Sigmoid colon (tissue), 7 donors: ENCODE measurements at regions of chr15 and their contacts with region 1.

Region 1: DNA sequence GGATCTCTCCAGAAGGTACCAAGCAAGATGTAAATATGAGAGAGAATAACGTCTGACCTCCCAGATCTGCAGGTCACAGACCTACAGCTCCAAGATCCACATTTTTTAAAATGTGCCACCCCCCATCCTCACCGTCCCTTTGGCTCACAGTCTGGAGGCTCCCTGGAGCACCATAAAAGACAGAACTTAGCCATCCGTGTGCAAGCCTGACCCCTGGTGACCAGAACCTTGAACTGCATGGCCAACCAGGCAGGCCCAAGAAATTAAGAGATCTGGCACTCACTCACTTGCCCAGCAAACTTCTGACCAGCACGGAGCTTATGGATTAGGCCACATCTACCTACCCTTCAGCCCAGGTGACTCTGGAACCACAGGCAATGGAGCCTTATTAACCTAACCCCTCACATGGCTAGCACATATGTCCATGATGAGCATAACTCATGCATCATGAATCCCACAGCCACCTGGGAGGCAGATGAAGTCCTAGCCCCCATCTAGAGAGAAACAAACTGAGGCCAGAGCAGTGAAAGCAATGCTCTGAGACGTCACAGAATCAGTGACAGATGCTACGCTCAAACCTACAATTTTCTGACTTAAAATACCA is 275.3 kb downstream of the UACA start:
- DNase-seq: peak; percentile 82
- H3K4me3 ChIP-seq: no peak overlapping the region
- H3K27ac ChIP-seq: no peak overlapping the region
- H3K4me1 ChIP-seq: no peaks in the 10 kb centered on the region
- H3K27me3 ChIP-seq: no peaks in the 10 kb centered on the region
- CTCF ChIP-seq: peak; percentile 89 to 97 (median 95)
- EP300 ChIP-seq: no peak
- POLR2A ChIP-seq: no peak

Region 2: DNA sequence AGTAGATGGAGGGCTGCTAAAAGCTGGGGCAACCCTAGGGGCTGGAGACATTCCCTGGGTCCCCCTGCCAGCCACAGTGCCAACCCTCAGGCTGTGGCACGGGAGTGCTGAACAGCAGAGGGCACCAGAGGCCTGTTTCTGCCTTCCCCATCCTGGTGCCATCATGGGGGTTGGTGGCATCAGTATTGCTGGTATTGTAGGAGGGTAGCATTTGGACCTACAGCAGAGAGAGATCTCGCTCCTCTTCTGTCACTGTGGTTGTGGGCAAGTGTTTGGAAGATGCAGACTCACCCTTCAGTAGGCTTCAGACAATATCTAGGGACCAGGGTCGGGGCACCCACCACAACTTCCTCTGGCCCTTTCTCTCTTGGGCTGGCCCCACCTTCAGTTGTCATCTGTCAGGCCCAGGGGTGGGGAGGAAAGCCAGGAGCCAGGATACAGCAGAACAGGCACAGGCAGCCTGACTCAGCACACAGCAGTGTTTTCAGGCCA is 912.0 kb before region 1 on chr15:
- intact Hi-C with region 1: loop called (anchors 2 kb)
- DNase-seq: no peak
- H3K4me3 ChIP-seq: no peak overlapping the region
- H3K27ac ChIP-seq: no peak overlapping the region
- H3K4me1 ChIP-seq: no peaks in the 10 kb centered on the region
- H3K27me3 ChIP-seq: no peaks in the 10 kb centered on the region
- CTCF ChIP-seq: peak; percentile 25 to 74 (median 69)
- EP300 ChIP-seq: no peak
- POLR2A ChIP-seq: no peak

Region 3: DNA sequence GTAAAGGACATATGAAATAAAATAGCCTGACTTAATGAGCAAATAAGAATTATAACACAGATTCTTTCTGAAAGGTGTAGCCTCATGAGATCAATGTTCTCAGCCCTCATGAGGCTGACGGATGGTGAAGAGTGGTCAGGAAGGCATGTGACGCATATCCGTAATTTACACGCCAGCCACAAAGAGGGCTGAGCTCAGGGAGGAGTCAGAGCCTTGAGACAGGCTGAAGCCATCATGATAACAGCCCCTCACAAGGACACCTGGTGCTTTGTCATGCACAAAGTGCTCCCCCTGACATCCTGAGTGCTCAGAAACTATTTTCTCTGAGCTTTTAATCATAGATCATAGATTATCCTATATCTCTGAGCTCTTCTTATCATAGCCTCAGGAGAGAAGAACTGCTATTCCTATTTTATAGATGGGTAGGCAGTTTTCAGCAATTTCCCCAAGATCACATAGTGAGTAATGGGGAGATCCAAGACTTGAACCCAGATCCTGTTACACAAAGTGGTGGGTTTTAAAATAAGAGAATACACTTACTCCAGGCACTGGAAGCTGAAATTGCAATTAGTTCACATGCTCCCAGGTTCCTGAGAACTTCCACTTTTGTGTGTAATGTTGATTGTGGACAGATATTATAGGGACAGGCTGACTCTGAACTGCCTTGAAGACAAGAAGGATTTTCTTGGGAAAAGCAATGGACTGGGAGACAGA is 768.4 kb before region 1 on chr15:
- intact Hi-C with region 1: loop called (anchors 5 kb)
- DNase-seq: no peak
- H3K4me3 ChIP-seq: no peak overlapping the region
- H3K27ac ChIP-seq: peak overlapping the region in 2 of 4 donors; percentile 15 to 32
- H3K4me1 ChIP-seq: peaks cover 0 to 20% (median 17%) of the 10 kb centered on the region in 4 donors
- H3K27me3 ChIP-seq: no peaks in the 10 kb centered on the region
- CTCF ChIP-seq: no peak
- EP300 ChIP-seq: peak in 1 of 4 donors; percentile 19
- POLR2A ChIP-seq: no peak

Region 4: DNA sequence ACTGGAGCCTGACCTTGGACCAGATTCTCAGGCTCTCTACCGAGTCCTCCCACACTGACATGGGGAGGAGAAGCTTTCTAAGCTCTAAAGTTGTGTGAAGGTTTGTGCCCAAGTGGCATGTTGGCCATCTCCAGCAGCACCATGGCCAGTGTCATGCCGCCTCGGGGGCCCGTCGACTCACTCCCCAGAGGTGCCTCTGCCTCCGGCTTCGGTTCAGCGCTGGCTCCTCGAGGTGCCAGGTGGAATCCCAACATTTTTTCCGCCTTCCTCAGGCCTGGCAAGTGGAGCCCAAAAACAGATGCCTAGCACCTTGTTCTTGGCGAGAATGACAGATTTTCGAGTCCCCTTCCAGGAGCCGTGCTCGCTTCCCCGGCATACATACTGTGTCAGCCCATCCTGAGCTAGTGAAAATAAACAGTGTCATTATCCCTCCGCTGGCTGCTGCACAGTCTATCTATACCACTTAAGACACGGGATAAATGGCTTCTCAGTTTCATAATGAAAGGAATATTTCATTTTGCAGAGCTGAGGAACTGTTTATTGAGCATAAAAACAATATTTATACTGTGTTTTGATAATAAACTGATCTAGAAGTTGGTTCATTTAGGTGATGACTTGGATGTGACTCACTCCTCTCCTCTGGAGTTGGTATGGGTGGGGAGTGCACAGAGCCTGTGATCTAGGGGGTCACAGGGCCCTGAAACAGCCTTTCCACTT is 61.8 kb before region 1 on chr15:
- intact Hi-C with region 1: no loop called
- DNase-seq: no peak
- H3K4me3 ChIP-seq: no peak overlapping the region
- H3K27ac ChIP-seq: no peak overlapping the region
- H3K4me1 ChIP-seq: no peaks in the 10 kb centered on the region
- H3K27me3 ChIP-seq: no peaks in the 10 kb centered on the region
- CTCF ChIP-seq: no peak
- EP300 ChIP-seq: no peak
- POLR2A ChIP-seq: no peak